Activated T-helper 1 cell treated with anti-CD3 and anti-CD28 coated beads, Interleukin-12 subunit alpha, Interleukin-12 subunit beta, Interleukin-2, Interleukin-4 antibody, amounts not matched to agents 30 ng/mL and 10 ng/mL and 1 ng/mL, durations not matched to agents 14 hours and 24 hours and 36 hours (primary cell): ENCODE measurements at regions of chr7 and their contacts with region 1.

Region 1: DNA sequence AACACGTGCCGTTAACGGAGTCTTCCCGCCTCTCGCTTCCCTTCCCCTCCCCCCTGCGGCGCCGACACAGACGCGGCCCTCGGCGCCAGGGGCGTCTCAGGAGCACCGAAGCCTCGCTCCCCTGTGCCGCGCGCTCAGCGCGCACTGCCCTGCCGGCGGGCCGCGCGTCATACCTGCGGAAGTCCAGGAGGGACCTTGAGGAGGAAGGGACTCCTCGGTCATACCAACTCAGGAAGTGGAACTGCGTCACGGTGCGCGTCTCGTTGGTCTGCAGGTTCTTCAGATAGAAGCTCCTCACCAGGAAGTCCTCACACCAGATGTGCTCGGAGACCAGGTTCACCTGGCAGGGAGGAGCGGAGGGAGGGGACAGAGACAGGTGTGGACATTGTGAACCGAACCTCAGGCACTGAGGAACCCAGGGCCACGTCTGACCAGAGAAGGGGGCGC is 239.7 kb downstream of the DNAJB6 start:
- DNase-seq: peak; percentile 28
- H3K4me3 Mint-ChIP-seq: peak overlapping the region; percentile 75
- H3K27ac Mint-ChIP-seq: peak overlapping the region; percentile 72
- H3K4me1 Mint-ChIP-seq: peaks cover 18% of the 10 kb centered on the region
- H3K27me3 Mint-ChIP-seq: peaks cover 5% of the 10 kb centered on the region

Region 2: GRCh38 chr7:157612664-157613561 is 36.5 kb after region 1 on chr7:
- intact Hi-C with region 1: loop called (anchors 5 kb)
- DNase-seq: peak; percentile 59
- H3K4me3 Mint-ChIP-seq: peak overlapping the region; percentile 82
- H3K27ac Mint-ChIP-seq: no peak overlapping the region
- H3K4me1 Mint-ChIP-seq: peaks cover 7% of the 10 kb centered on the region
- H3K27me3 Mint-ChIP-seq: no peaks in the 10 kb centered on the region